ENCODE measurements at regions of chr10 and their contacts with region 1.

Region 1: GRCh38 chr10:78029269-78030226 is at the start of gene POLR3A:
- DNase-seq: peak; percentile 94 to 99
- H3K4me3 ChIP-seq: peak within 1 kb of the TSS; percentile 98
- CTCF ChIP-seq: peak in 1 of 3 donors; percentile 69
- POLR2A ChIP-seq: no peak
- total RNA-seq, gene POLR3A: 8.7 to 11.1 (median 10.9) TPM

Region 2: DNA sequence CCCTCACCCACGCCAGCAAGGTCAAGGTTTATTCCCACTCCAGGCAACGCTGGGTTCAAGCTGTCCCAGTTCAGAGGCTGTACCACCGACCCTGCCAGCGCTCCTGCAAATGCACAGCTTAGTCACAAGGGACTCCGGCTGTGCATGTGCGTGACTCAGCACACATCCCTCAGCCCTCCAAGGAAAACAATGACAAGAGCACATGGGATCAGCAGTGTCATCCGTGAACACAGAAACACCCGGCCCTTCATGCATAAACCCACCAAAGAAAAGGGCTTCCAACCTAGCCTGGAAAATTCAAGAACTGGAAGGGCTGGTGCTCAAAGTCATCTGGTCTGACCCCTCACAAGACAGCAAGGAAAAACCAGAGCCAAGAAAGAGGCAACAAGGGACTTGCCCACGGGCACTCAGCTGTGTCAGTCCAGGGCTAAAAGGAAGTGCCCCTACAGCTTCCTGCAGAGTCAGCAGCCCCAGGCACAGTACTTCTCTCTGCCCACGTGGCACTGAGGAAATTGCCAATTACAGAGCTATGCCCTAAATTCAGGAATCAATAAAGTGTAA is 498.0 kb before region 1 on chr10:
- intact Hi-C with region 1: no loop called
- DNase-seq: peak in 1 of 2 donors; percentile 36
- H3K4me3 ChIP-seq: no peak overlapping the region
- CTCF ChIP-seq: no peak
- POLR2A ChIP-seq: no peak

Region 3: DNA sequence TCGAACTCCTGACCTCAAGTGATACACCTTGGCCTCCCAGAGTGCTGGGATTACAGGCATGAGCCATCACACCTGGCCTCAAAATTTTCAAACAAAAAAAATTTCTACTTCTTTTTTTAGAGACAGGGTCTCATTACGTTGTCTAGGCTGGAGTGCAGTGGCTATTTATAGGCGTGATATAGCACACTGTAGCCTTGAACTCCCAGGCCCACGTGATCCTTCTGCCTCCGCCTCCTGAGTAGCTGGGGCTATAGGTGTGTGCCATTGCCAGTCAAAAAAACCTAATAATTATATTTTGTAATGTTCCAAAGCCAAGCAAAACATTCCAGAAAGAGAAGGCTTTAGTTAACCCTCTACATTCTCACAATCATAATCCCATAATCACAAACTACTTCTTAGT is 14.0 kb before region 1 on chr10:
- intact Hi-C with region 1: loop called (anchors 1 kb)
- DNase-seq: no peak
- H3K4me3 ChIP-seq: no peak overlapping the region
- CTCF ChIP-seq: no peak
- POLR2A ChIP-seq: no peak

Region 4: DNA sequence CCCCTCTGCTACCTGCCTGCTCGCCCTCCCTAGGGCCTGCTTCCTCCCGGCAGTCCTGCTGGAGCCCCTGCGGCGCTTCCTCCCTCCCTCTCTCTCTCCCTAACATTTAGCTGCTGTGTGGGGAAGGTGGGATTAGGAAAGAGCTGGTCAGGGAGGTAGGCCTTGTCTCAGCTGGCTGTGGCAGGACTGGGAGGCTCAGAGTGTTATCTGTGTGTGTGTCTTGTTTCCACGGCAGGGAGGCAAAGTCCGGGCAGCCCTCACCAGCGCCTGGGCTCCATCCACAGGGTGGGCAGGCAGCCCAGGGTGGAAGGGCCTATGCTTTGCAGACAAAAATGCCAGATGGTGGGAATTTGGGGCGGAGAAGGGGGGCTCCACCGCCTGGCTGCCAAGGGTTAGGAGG is 109.8 kb after region 1 on chr10:
- intact Hi-C with region 1: no loop called
- DNase-seq: no peak
- H3K4me3 ChIP-seq: no peak overlapping the region
- CTCF ChIP-seq: no peak
- POLR2A ChIP-seq: no peak

Region 5: DNA sequence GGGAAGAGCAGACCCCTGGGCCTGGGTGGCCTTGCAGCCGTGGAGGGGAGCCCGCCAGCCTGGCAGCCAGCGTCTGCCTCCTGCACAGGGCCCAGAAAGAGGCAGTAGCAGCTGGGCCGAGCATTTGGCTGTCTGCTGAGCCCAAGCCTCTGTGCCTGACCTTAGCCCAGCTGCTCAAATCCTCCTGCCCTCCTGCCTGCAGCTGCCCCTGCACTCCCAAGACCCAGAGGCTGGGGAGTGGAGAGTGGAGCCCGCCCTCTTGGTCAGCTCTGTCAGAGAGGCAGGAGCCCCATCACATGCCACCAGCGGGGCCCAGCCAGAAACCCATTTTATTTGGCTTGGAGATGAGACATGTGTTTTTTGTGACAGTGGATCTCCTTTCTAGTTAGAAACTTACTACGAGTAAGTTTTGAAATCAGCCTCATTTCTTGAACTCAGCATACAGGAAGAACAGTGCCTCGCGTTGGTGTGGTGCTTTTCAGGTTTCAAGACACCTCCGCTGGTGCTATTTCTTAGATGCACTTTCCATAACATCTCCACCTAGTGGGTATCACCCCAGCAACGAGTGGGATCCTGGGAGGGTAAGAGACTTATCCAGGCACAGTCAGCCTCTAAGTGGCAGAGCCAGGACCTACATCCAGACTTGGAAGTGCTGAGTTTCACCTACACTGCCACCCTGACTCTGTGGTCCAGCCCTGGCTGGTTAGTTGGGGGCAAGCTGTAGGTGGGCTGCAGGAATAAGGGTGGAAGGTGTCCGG is 481.2 kb after region 1 on chr10:
- intact Hi-C with region 1: no loop called
- DNase-seq: peak in 1 of 2 donors; percentile 90
- H3K4me3 ChIP-seq: no peak overlapping the region
- CTCF ChIP-seq: no peak
- POLR2A ChIP-seq: no peak